Natural killer cell (primary cell): ENCODE measurements at regions of chr2 and their contacts with region 1.

Region 1: DNA sequence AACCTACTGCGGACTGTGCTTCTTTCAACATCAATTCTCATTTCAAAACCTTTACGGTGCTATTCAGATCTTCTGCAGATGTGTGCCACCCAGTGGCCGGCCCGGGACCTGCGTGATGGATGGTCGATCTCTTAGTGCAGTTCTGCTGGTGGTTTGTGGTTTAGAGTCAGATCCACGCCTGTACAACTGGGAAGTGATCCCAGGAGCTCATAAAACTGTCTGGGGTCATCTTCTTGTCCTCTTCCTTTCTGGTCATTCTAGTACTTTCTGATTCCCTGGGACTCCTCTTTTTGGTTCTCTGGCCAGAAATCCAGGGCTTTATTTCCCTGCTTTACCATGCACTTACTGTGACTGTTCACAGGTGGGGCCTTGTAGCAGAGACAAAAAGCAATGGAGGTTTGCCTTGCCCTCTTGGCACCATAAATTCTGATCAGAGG is 15.8 kb upstream of the SELENOI start:
- DNase-seq: peak; percentile 75 to 85
- ATAC-seq: peak; percentile 94 to 100 (median 99)
- H3K4me3 ChIP-seq: no peak overlapping the region
- H3K4me3 Mint-ChIP-seq: no peak overlapping the region
- H3K27ac ChIP-seq: no peak overlapping the region
- H3K27ac Mint-ChIP-seq: no peak overlapping the region
- H3K4me1 ChIP-seq: no peaks in the 10 kb centered on the region
- H3K4me1 Mint-ChIP-seq: peaks cover 8 to 9% of the 10 kb centered on the region in 2 donors
- H3K27me3 ChIP-seq: no peaks in the 10 kb centered on the region
- H3K27me3 Mint-ChIP-seq: peaks cover 0 to 3% of the 10 kb centered on the region in 2 donors
- CTCF ChIP-seq: peak; percentile 94

Region 2: DNA sequence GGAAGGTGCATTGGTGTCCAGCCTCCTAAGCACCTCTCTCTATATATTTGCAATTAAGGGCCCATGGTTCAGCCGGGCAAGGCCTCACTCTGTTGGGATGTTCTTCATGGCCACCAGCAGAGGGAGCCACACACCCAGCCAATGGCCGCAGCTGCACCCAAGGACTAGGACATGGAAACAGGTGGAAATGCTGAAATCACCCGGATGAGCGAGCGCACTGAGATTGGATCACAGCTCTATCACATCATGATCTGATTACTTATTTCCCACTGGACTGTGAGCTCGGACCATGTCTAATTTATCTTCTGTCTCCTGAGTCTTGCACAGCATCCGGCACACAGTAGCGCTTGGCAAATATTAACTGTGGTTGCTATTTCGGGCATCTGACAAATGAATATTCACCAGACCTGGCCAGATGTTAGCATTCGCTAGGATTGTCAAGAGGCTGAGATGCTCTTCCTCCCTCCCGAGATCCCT is 379.0 kb before region 1 on chr2:
- intact Hi-C with region 1: loop called (anchors 1 kb)
- DNase-seq: peak; percentile 63 to 88
- ATAC-seq: peak; percentile 88 to 98 (median 96)
- H3K4me3 ChIP-seq: no peak overlapping the region
- H3K4me3 Mint-ChIP-seq: no peak overlapping the region
- H3K27ac ChIP-seq: no peak overlapping the region
- H3K27ac Mint-ChIP-seq: no peak overlapping the region
- H3K4me1 ChIP-seq: peaks cover 3% of the 10 kb centered on the region
- H3K4me1 Mint-ChIP-seq: peaks cover 0 to 5% of the 10 kb centered on the region in 2 donors
- H3K27me3 ChIP-seq: no peaks in the 10 kb centered on the region
- H3K27me3 Mint-ChIP-seq: no peaks in the 10 kb centered on the region
- CTCF ChIP-seq: peak; percentile 93

Region 3: DNA sequence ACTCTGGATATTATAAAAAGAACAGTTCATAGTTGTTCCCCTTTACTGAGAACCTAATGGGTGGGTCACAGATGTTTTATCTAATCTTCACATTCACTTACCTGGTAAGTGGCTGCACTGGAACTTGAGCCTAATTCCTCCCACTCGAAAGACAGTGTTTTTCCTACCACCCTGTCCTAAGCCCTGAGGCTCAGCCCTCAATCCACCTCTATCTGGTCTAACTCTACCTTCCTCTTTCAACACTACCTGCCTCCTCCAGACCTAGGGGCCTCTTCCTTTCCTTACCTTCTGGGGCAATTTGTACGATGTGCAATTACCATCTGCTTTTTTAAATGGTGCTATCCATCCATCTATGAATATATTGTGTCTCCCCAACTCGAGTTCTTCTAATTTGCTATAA is 338.2 kb before region 1 on chr2:
- intact Hi-C with region 1: loop called (anchors 2 kb)
- DNase-seq: no peak
- ATAC-seq: no peak
- H3K4me3 ChIP-seq: no peak overlapping the region
- H3K4me3 Mint-ChIP-seq: no peak overlapping the region
- H3K27ac ChIP-seq: no peak overlapping the region
- H3K27ac Mint-ChIP-seq: peak overlapping the region in 1 of 2 donors; percentile 29
- H3K4me1 ChIP-seq: no peaks in the 10 kb centered on the region
- H3K4me1 Mint-ChIP-seq: no peaks in the 10 kb centered on the region
- H3K27me3 ChIP-seq: no peaks in the 10 kb centered on the region
- H3K27me3 Mint-ChIP-seq: peaks cover 0 to 3% of the 10 kb centered on the region in 2 donors
- CTCF ChIP-seq: no peak

Region 4: DNA sequence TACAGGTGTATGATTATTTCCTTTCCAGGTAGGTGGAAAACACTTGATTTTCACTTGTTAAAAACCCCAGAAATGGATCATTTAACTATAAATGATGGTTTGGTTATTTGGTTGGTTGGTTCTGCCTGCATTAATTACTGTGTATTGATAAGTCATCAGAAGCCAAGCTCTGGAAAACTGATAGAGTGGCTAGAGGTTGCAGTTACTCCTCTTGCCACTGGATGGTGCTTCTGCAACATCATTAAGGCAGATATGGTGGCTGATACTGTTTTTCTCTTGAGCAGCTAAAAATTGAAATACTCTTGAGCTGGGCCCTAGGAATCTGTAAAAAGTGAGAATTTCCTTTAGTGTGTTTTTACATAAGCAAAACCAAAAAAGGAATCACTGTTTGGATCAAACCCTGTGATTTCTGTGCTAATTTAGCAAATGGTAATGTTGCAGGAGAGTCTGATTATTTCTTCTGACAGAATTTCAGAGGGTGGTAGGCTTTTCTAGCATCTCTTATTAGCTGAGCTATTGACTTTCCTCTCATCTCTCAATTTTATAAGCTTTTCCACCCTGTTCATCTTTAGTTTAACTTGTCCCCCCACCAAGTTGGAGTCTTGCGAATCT is 242.0 kb before region 1 on chr2:
- intact Hi-C with region 1: loop called (anchors 2 kb)
- DNase-seq: peak in 1 of 2 donors; percentile 62
- ATAC-seq: peak; percentile 60 to 76 (median 65)
- H3K4me3 ChIP-seq: no peak overlapping the region
- H3K4me3 Mint-ChIP-seq: no peak overlapping the region
- H3K27ac ChIP-seq: no peak overlapping the region
- H3K27ac Mint-ChIP-seq: no peak overlapping the region
- H3K4me1 ChIP-seq: peaks cover 4% of the 10 kb centered on the region
- H3K4me1 Mint-ChIP-seq: peaks cover 57 to 66% of the 10 kb centered on the region in 2 donors
- H3K27me3 ChIP-seq: no peaks in the 10 kb centered on the region
- H3K27me3 Mint-ChIP-seq: no peaks in the 10 kb centered on the region
- CTCF ChIP-seq: peak; percentile 83

Region 5: GRCh38 chr2:26172871-26173775 is 157.0 kb before region 1 on chr2 and contains the start of gene GAREM2:
- intact Hi-C with region 1: loop called (anchors 5 kb)
- DNase-seq: no peak
- ATAC-seq: peak in 2 of 3 donors; percentile 12 to 27
- H3K4me3 ChIP-seq: no peak within 1 kb of the TSS
- H3K4me3 Mint-ChIP-seq: peak within 1 kb of the TSS; percentile 94
- H3K27ac ChIP-seq: no peak within 1 kb of the TSS
- H3K27ac Mint-ChIP-seq: peak within 1 kb of the TSS in 1 of 2 donors; percentile 47
- H3K4me1 ChIP-seq: peaks cover 22% of the 10 kb centered on the region
- H3K4me1 Mint-ChIP-seq: peaks cover 17 to 24% of the 10 kb centered on the region in 2 donors
- H3K27me3 ChIP-seq: peaks cover 22% of the 10 kb centered on the region
- H3K27me3 Mint-ChIP-seq: peaks cover 40 to 48% of the 10 kb centered on the region in 2 donors
- CTCF ChIP-seq: no peak
- total RNA-seq, gene GAREM2: 7.1 to 9.2 (median 7.2) TPM

Region 6: DNA sequence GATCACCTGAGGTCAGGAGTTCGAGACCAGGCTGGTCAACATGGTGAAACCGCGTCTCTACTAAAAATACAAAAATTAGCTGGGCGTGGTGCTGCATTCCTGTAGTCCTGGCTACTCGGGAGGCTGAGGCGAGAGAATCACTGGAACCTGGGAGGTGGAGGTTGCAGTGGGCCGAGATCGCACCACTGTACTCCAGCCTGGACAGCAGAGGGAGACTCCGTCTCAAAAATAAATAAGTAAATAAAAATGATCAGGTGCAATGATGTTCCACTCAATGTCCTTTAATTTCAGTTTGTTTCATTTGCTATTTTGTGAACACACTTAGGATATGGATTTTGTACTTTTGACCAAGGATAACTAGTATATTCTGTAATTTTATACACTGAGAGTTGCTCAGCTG is 95.0 kb before region 1 on chr2:
- intact Hi-C with region 1: loop called (anchors 2 kb)
- DNase-seq: peak in 1 of 2 donors; percentile 27
- ATAC-seq: no peak
- H3K4me3 ChIP-seq: no peak overlapping the region
- H3K4me3 Mint-ChIP-seq: no peak overlapping the region
- H3K27ac ChIP-seq: no peak overlapping the region
- H3K27ac Mint-ChIP-seq: no peak overlapping the region
- H3K4me1 ChIP-seq: no peaks in the 10 kb centered on the region
- H3K4me1 Mint-ChIP-seq: peaks cover 11 to 13% of the 10 kb centered on the region in 2 donors
- H3K27me3 ChIP-seq: no peaks in the 10 kb centered on the region
- H3K27me3 Mint-ChIP-seq: no peaks in the 10 kb centered on the region
- CTCF ChIP-seq: no peak

Region 7: DNA sequence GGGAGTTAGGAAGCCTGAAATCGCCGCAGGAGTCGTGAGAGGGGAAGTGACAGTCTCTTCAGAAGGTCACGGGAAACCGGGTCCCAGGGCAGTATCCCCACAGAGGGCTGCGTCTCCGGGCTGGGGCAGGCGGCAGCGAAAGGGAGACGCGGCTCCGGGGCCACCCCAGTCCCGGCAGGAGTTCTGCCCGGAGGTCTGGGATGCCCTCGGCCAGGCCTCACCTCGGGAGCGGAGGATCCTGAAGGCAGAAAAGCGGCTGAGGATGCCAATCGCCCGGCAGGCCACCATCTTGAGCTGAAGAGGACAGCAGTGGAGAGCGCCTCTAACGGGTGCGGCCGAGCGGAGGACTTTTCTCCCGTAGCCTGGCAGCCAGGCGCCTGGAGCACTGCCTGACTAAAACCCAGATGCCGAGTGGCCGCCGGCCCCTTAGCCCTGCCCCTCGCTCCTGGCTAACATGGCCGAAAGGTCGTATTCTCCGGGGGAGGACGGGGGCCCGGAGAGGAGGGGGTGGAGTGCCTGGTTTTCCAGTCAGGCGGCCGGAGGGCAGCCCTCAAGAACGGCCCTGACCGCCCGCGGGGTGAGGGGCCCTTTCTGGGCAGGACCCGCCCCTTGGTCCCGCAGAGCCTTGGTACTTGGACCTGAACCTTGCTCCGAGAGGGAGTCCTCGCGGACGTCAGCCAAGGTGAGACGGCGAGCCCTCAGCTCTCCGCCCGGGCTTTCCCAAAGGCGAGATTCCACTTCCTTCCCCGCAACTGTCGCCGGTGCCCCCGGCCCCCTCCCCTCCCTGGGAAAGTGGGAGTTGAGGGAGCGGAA is 85.6 kb before region 1 on chr2 and contains the starts of genes HADHA and HADHB:
- intact Hi-C with region 1: loop called (anchors 2 kb)
- DNase-seq: peak; percentile 83 to 91
- ATAC-seq: peak; percentile 82 to 94 (median 87)
- H3K4me3 ChIP-seq: peak within 1 kb of the TSS; percentile 79
- H3K4me3 Mint-ChIP-seq: peak within 1 kb of the TSS; percentile 100
- H3K27ac ChIP-seq: peak within 1 kb of the TSS; percentile 97
- H3K27ac Mint-ChIP-seq: peak within 1 kb of the TSS; percentile 91 to 95
- H3K4me1 ChIP-seq: peaks cover 21% of the 10 kb centered on the region
- H3K4me1 Mint-ChIP-seq: peaks cover 58 to 60% of the 10 kb centered on the region in 2 donors
- H3K27me3 ChIP-seq: no peaks in the 10 kb centered on the region
- H3K27me3 Mint-ChIP-seq: no peaks in the 10 kb centered on the region
- CTCF ChIP-seq: no peak
- total RNA-seq, gene HADHA: 66.6 to 76.1 (median 68.9) TPM
- total RNA-seq, gene HADHB: 43.1 to 58.8 (median 53.0) TPM